GM10248 (cell line): ENCODE measurements at regions of chr2 and their contacts with region 1.

Region 1: GRCh38 chr2:178796079-178796677 is 11.0 kb downstream of the TTN start:
- DNase-seq: peak; percentile 46
- CTCF ChIP-seq: peak; percentile 49

Region 2: DNA sequence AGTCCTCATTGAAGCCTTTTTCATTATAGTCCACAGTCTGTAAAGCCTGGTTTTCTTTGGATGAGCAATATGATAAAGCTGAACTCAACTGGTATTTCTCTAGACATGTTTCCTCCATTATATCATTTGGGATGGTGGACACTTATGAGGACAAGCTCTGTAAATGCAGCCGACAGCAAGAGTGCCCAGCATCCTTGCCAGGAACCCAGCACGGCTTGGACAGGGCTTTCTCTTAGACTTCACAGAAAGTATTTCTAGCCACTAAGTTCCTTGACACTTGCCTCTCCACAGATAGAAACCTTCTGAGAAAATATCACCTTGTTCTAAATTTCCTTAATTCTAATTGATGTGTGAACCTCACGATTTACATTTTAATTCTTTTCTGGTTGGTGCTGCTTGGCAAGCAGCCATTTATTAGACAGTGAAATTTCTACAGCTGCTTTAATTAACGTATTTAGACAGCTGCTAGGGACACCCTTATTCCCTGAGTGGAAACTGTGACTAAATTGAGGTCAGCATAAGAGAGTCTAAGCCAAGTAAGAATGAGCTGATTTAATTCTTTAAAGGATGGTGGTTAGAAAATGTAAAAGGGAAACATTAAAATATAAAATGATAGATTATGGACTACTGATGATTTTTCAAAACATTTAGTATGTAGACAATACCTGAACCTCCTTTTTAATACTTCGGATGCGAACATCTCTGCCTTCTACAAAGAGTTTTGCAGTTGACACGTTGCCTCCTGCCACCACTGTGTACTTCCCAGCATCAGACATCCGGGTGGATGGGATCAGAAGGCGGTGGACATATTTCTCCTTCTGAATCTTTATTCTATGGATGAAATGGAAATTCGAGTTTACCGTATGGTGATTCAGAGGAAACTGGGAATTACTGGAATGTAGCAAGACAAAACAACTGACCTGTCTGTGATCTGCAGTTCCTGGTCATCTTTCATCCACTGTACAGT is 28.8 kb before region 1 on chr2:
- CTCF ChIA-PET with region 1: interaction called, 10 read pairs
- POLR2A ChIA-PET with region 1: no interaction called
- DNase-seq: no peak
- CTCF ChIP-seq: no peak

Region 3: GRCh38 chr2:178782236-178782635 is 13.9 kb before region 1 on chr2:
- CTCF ChIA-PET with region 1: interaction called, 17 read pairs
- POLR2A ChIA-PET with region 1: no interaction called
- DNase-seq: no peak
- CTCF ChIP-seq: no peak

Region 4: GRCh38 chr2:178811901-178812300 is 15.7 kb after region 1 on chr2:
- CTCF ChIA-PET with region 1: interaction called, 10 read pairs
- POLR2A ChIA-PET with region 1: no interaction called
- DNase-seq: no peak
- CTCF ChIP-seq: no peak